ENCODE measurements at regions of chr9 and their contacts with region 1.

Region 1: DNA sequence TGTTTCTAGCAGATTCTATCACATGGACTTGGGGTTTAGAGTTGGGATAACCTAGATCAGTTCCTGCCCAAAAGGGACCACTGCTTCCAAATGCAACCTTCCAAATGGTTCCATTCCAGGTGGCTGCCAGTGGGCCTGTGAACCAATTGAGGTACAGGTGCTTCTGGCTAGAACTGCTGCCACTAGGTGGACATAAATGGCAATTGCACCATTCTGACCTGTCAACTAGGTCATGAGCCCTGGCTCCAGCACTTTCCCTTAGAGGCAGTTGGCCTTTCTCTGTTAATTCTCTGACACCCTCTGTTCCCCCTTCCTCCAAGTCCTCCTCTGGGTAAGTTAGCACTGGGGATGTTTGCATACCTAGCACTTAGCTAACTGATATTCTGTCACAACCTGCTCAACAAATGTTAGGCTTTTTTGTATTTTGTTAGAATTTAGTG is 16.6 kb upstream of the HEMGN start:
- DNase-seq: peak; percentile 69
- ATAC-seq: peak; percentile 90
- H3K4me3 Mint-ChIP-seq: no peak overlapping the region
- H3K27ac Mint-ChIP-seq: no peak overlapping the region
- H3K4me1 Mint-ChIP-seq: peaks cover 9% of the 10 kb centered on the region
- H3K27me3 Mint-ChIP-seq: no peaks in the 10 kb centered on the region

Region 2: DNA sequence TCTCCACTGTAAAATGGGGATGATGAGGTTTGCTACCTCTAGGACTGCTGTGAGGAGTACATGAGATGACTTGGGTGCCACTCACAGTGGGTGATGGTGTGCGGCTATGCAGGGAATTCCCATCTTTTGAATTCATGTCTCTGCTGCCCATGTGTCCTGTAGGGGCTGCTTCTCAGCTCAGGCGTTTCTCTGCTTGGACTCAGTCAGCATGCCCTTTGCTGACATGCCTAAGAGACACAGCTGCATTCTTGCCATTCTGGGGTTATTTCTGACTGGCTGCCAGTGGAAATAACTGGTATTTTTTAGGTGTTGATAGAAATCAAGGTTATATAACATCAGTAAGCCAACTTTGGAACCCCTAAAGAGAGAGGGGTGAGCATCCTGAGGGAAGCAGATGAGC is 233.2 kb before region 1 on chr9:
- CTCF ChIA-PET with region 1: no interaction called
- POLR2A ChIA-PET with region 1: no interaction called
- intact Hi-C with region 1: no loop called
- DNase-seq: no peak
- ATAC-seq: no peak
- H3K4me3 Mint-ChIP-seq: no peak overlapping the region
- H3K27ac Mint-ChIP-seq: no peak overlapping the region
- H3K4me1 Mint-ChIP-seq: no peaks in the 10 kb centered on the region
- H3K27me3 Mint-ChIP-seq: peaks cover 14% of the 10 kb centered on the region

Region 3: GRCh38 chr9:97938081-97938644 is 16.4 kb before region 1 on chr9 and contains the start of gene HEMGN:
- CTCF ChIA-PET with region 1: interaction called, 12 read pairs
- POLR2A ChIA-PET with region 1: no interaction called
- intact Hi-C with region 1: no loop called
- DNase-seq: peak; percentile 48
- ATAC-seq: peak; percentile 85
- H3K4me3 Mint-ChIP-seq: peak within 1 kb of the TSS; percentile 38
- H3K27ac Mint-ChIP-seq: peak within 1 kb of the TSS; percentile 75
- H3K4me1 Mint-ChIP-seq: peaks cover 38% of the 10 kb centered on the region
- H3K27me3 Mint-ChIP-seq: no peaks in the 10 kb centered on the region
- total RNA-seq, gene HEMGN: 1.5 to 2.9 TPM

Region 4: GRCh38 chr9:97966493-97966892 is 11.9 kb after region 1 on chr9:
- CTCF ChIA-PET with region 1: interaction called, 14 read pairs
- POLR2A ChIA-PET with region 1: interaction called, 3 read pairs
- intact Hi-C with region 1: no loop called
- DNase-seq: no peak
- ATAC-seq: peak; percentile 58
- H3K4me3 Mint-ChIP-seq: no peak overlapping the region
- H3K27ac Mint-ChIP-seq: no peak overlapping the region
- H3K4me1 Mint-ChIP-seq: peaks cover 14% of the 10 kb centered on the region
- H3K27me3 Mint-ChIP-seq: peaks cover 2% of the 10 kb centered on the region

Measured in activated CD4-positive, alpha-beta T cell treated with anti-CD3 and anti-CD28 coated beads for 36 hours (primary cell).